Activated CD4-positive, alpha-beta T cell treated with anti-CD3 and anti-CD28 coated beads for 36 hours (primary cell): ENCODE measurements at regions of chr19 and their contacts with region 1.

Region 1: DNA sequence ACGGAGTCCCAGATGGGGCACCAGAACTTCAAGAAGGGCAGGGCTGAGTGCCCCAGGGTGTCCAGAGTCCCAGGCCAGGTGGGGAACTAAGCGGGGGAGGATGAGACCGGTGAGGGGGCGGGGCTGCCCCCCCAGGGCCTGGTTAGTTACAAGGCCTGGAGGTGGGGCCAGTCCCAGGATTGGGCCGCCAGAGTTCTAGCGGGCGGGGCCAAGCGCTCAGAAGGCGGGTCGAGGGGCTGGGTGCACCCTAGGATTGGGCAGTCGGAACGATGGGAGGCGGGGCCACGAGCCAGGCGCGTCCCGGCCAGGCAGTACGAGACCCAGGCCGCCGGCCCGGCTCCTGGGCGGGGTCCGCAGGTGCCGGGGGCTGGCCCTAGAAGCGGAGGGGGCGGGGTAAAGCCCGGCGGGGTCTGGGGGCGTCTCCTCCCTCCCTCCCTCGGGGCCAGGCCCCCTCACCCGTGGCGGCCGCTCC is 571 bp downstream of the ZNF653 start:
- DNase-seq: peak; percentile 98
- ATAC-seq: peak; percentile 95
- H3K4me3 Mint-ChIP-seq: peak overlapping the region; percentile 83
- H3K27ac Mint-ChIP-seq: peak overlapping the region; percentile 87
- H3K4me1 Mint-ChIP-seq: peaks cover 12% of the 10 kb centered on the region
- H3K27me3 Mint-ChIP-seq: no peaks in the 10 kb centered on the region

Region 2: DNA sequence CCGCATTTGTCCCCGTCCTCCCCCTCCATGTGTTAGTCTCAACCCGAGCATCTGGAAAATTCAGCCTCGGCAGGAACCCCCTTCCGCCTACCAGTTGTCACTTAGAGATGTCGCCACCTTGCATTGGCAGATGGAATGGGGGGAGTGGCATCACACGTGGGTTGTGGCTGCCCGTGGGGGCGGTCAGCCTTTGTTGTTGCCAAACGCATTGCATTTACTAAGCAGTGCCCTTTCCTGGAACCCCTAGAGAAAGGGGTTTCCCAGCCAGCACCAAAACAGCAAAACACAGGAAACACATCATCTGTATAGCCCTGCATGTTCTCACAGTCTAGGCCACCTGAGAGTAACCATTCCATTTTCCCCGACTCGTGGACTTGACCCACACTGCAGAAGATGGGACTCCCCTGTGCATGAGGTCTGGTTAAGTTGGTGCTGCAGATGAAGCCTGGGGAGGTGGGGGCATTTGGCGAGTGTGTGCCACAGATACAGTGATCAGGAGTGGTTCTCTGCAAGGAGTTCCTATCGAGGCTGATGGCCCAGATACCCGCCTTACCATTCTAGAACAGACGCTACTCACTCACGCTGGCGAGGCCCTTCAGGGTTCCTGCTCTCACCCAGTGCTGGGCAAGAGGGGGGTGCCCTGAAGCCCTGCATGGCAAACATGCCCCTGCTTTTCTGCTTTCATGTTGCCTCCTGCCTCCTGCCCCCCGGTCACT is 707.4 kb before region 1 on chr19:
- CTCF ChIA-PET with region 1: no interaction called
- POLR2A ChIA-PET with region 1: no interaction called
- intact Hi-C with region 1: loop called in 1 of 2 experiments (anchors 1 kb)
- DNase-seq: peak; percentile 95
- ATAC-seq: peak; percentile 94
- H3K4me3 Mint-ChIP-seq: peak overlapping the region; percentile 68
- H3K27ac Mint-ChIP-seq: peak overlapping the region; percentile 97
- H3K4me1 Mint-ChIP-seq: peaks cover 36% of the 10 kb centered on the region
- H3K27me3 Mint-ChIP-seq: no peaks in the 10 kb centered on the region

Region 3: GRCh38 chr19:11321191-11322126 is 183.6 kb before region 1 on chr19:
- CTCF ChIA-PET with region 1: no interaction called
- POLR2A ChIA-PET with region 1: no interaction called
- intact Hi-C with region 1: no loop called
- DNase-seq: peak; percentile 13
- ATAC-seq: no peak
- H3K4me3 Mint-ChIP-seq: no peak overlapping the region
- H3K27ac Mint-ChIP-seq: no peak overlapping the region
- H3K4me1 Mint-ChIP-seq: peaks cover 15% of the 10 kb centered on the region
- H3K27me3 Mint-ChIP-seq: peaks cover 12% of the 10 kb centered on the region

Region 4: DNA sequence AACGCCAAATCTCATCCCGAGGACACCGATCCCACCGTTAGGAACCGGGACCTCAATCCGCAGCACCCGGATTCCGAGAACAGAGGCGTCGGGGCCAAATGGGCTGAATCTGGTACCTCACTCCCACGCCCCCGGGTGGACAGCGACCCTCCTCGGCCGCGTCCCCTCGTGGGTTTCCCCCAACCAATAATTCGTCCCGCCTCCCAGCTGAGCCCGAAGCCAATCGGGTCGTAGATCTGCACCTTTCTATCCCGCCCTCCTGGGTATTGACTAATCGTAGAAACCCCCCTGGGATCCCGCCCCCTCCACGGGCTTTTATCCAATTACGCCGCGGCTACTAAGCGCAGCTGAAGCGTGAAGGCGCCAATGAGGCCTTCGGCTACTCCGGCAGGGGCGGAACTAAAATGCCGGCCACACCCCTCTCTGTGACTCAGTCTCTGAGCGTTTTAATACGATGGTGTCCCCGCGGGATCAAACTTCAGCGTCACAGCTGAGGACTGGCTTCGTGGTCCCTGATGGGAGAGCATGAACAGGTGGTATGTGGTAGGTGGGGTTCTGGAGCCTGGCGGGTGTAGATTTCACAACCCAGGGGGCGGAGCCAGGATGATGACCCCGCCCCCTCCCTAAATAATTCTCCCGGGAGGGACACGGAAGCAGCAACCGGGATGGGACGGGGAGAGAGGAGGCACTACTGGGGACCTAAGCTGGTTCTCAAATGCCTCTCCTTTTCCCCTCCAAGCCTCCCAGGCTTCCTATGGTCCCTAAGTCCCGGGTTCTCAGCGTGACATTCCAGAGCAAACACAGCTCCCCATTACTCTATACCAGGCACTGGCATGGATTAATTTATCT is 158.8 kb before region 1 on chr19 and contains the starts of genes CCDC159 and TMEM205:
- CTCF ChIA-PET with region 1: no interaction called
- POLR2A ChIA-PET with region 1: interaction called, 5 read pairs
- intact Hi-C with region 1: loop called in 1 of 2 experiments (anchors 1 kb)
- DNase-seq: peak; percentile 99
- ATAC-seq: peak; percentile 99
- H3K4me3 Mint-ChIP-seq: peak within 1 kb of the TSS; percentile 83
- H3K27ac Mint-ChIP-seq: peak within 1 kb of the TSS; percentile 82
- H3K4me1 Mint-ChIP-seq: peaks cover 23% of the 10 kb centered on the region
- H3K27me3 Mint-ChIP-seq: no peaks in the 10 kb centered on the region
- total RNA-seq, gene CCDC159: 15.3 to 18.0 TPM
- total RNA-seq, gene TMEM205: 28.0 to 32.6 TPM

Region 5: DNA sequence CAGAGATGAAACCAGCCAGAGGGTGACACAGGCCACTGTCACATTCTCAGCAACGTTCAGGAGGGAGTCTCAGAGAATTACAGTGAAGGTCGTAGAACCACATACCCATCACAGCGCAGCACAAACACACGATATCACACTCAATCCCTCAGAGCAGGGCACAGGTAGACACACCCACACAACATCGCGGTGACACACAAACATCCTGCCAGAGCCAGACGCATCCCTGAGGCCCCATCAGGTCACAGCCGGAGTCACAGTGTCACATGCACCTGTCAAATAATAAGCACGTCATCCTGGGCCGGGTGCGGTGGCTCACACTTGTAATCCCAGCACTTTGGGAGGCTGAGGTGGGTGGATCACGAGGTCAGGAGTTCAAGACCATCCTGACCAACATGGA is 41.7 kb before region 1 on chr19:
- CTCF ChIA-PET with region 1: no interaction called
- POLR2A ChIA-PET with region 1: no interaction called
- intact Hi-C with region 1: no loop called
- DNase-seq: peak; percentile 44
- ATAC-seq: peak; percentile 68
- H3K4me3 Mint-ChIP-seq: no peak overlapping the region
- H3K27ac Mint-ChIP-seq: peak overlapping the region; percentile 25
- H3K4me1 Mint-ChIP-seq: no peaks in the 10 kb centered on the region
- H3K27me3 Mint-ChIP-seq: peaks cover 14% of the 10 kb centered on the region

Region 6: DNA sequence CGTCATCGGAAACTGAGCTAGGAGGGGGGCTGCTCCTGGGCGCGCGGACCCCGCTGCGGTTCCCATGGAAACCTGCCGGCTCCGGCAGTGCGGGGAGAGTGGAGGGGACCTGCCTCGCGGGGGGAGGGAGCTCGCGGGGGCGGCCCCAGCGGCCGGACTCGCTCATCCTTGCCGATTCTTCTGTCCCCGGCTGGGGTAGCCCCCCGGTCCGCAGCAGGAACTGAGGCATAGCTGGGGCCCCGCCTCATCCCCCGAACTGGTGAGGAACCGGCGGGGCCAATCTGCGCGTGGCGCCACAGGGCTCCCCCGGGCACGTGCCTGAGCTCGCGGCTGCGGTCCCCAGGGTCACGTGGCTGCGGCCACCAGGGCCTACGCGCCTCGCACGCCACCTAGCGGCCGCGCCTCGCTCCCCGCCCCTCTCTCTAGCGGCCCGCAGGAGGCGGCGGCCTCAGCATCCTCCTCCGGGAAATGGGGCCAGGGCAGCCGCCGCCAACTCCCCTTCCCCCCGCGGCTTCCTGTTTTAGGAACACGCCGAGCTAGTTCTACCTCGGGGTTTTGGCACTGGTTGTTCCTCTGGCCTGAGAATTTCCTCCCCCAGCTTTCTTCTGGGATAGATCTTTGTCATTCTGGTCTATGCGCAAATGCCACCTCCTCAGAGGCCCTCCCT is 22.6 kb before region 1 on chr19:
- CTCF ChIA-PET with region 1: interaction called, 6 read pairs
- POLR2A ChIA-PET with region 1: no interaction called
- intact Hi-C with region 1: loop called (anchors 1 to 2 kb)
- DNase-seq: peak; percentile 93
- ATAC-seq: peak; percentile 64
- H3K4me3 Mint-ChIP-seq: peak overlapping the region; percentile 66
- H3K27ac Mint-ChIP-seq: peak overlapping the region; percentile 78
- H3K4me1 Mint-ChIP-seq: peaks cover 17% of the 10 kb centered on the region
- H3K27me3 Mint-ChIP-seq: peaks cover 20% of the 10 kb centered on the region

Region 7: GRCh38 chr19:11558881-11559828 is 54.1 kb after region 1 on chr19 and contains the start of gene ELOF1:
- CTCF ChIA-PET with region 1: no interaction called
- POLR2A ChIA-PET with region 1: no interaction called
- intact Hi-C with region 1: loop called (anchors 1 kb)
- DNase-seq: peak; percentile 99
- ATAC-seq: peak; percentile 93
- H3K4me3 Mint-ChIP-seq: peak within 1 kb of the TSS; percentile 90
- H3K27ac Mint-ChIP-seq: peak within 1 kb of the TSS; percentile 94
- H3K4me1 Mint-ChIP-seq: peaks cover 44% of the 10 kb centered on the region
- H3K27me3 Mint-ChIP-seq: no peaks in the 10 kb centered on the region
- total RNA-seq, gene ELOF1: 48.0 to 53.7 TPM

Region 8: DNA sequence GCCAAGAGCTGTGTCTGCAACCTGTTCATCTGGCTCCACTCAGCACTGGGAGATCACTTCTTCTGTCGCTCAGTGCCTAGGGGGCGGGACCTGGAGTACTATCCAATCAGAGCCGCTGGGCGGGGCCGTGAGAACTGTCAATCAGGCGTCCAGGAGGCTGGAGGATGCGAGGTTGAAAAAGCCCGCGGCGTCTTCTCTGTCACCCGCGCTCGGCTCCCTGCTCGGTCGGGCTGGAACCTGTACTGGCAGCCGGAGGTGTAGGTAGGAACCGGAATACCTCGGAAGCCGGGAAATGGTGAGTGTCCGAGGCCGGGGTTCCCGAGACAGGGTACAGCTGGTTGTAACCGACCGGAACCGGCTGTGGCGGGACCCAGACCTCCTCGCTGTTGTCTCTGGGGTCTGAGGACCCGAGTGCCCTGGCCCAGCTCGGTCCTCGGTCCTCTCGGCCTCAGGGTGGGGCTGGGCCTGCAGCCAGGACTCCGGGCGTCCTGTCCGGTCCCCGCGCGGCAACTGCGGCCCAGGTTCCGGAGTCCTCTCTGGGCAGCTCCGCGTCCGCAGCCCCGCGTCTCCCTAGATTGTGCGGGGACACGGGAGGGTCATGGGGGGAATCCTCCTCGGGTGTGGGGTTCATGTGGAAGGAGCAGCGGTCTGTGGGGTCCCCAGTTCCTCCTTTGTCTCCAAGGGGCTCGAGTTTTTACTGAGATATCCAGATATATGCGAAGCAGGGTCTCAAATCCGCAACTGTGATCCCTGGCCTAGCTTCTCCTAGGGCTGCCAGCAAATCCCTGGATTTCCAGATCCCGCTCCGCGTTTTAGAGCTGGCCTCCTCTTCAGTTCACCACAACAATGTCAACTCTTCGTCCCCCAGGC is 134.8 kb after region 1 on chr19:
- CTCF ChIA-PET with region 1: no interaction called
- POLR2A ChIA-PET with region 1: no interaction called
- intact Hi-C with region 1: loop called in 1 of 2 experiments (anchors 1 kb)
- DNase-seq: peak; percentile 98
- ATAC-seq: peak; percentile 100
- H3K4me3 Mint-ChIP-seq: peak overlapping the region; percentile 76
- H3K27ac Mint-ChIP-seq: no peak overlapping the region
- H3K4me1 Mint-ChIP-seq: no peaks in the 10 kb centered on the region
- H3K27me3 Mint-ChIP-seq: peaks cover 10% of the 10 kb centered on the region

Region 9: DNA sequence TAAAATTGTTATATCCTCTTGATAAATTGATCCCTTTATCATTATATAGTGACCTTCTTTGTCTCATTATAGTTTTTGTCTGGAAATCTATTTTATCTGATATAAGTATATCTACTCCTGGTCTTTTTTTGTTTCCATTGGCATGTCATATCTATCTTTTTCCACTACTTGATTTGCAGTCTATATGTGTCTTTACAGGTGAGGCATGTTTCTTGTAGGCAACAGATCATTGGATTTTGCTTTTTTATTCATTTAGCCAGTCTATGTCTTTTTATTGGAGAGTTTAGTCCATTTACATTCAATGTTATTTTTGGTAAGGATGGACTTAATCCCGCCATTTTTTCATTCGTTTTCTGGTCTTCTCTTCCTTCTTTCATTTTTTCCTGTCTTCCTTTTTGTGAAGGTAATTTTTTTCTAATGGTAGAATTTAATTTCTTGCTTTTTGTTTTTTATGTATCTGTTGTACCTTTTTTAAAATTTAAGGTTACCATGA is 247.2 kb after region 1 on chr19:
- CTCF ChIA-PET with region 1: no interaction called
- POLR2A ChIA-PET with region 1: no interaction called
- intact Hi-C with region 1: no loop called
- DNase-seq: no peak
- ATAC-seq: no peak
- H3K4me3 Mint-ChIP-seq: no peak overlapping the region
- H3K27ac Mint-ChIP-seq: no peak overlapping the region
- H3K4me1 Mint-ChIP-seq: no peaks in the 10 kb centered on the region
- H3K27me3 Mint-ChIP-seq: peaks cover 12% of the 10 kb centered on the region